H1 (cell line): ENCODE measurements at regions of chr17 and their contacts with region 1.

Region 1: GRCh38 chr17:31524926-31525800 is 133.7 kb downstream of the RAB11FIP4 start:
- DNase-seq: peak; percentile 77 to 99
- H3K4me3 ChIP-seq: no peak overlapping the region
- H3K27ac ChIP-seq: no peak overlapping the region
- H3K4me1 ChIP-seq: no peaks in the 10 kb centered on the region; a peak in 3 of 7 replicates
- H3K27me3 ChIP-seq: no peaks in the 10 kb centered on the region
- CTCF ChIP-seq: peak; percentile 80 to 99 (median 91)
- EP300 ChIP-seq: no peak
- POLR2A ChIP-seq: no peak
- RAD21 ChIP-seq: peak; percentile 97 to 99

Region 2: GRCh38 chr17:31388770-31389661 is 136.1 kb before region 1 on chr17:
- CTCF ChIA-PET with region 1: interaction called, 35 read pairs
- POLR2A ChIA-PET with region 1: no interaction called
- DNase-seq: peak in 1 of 2 experiments; percentile 87
- H3K4me3 ChIP-seq: peak overlapping the region in 1 of 4 experiments; percentile 30; a peak in 1 of 8 replicates
- H3K27ac ChIP-seq: no peak overlapping the region
- H3K4me1 ChIP-seq: peaks cover 0 to 14% (median 9%) of the 10 kb centered on the region in 4 experiments; a peak in 6 of 7 replicates
- H3K27me3 ChIP-seq: peaks cover 1 to 29% (median 22%) of the 10 kb centered on the region in 4 experiments
- CTCF ChIP-seq: peak; percentile 78 to 89 (median 85)
- EP300 ChIP-seq: no peak
- POLR2A ChIP-seq: no peak
- RAD21 ChIP-seq: peak; percentile 67 to 79

Region 3: GRCh38 chr17:31448467-31449077 is 76.6 kb before region 1 on chr17:
- CTCF ChIA-PET with region 1: interaction called, 325 read pairs
- POLR2A ChIA-PET with region 1: no interaction called
- DNase-seq: no peak
- H3K4me3 ChIP-seq: no peak overlapping the region
- H3K27ac ChIP-seq: no peak overlapping the region
- H3K4me1 ChIP-seq: peaks cover 0 to 9% (median under 1%) of the 10 kb centered on the region in 4 experiments; a peak in 2 of 7 replicates
- H3K27me3 ChIP-seq: no peaks in the 10 kb centered on the region
- CTCF ChIP-seq: no peak
- EP300 ChIP-seq: no peak
- POLR2A ChIP-seq: no peak
- RAD21 ChIP-seq: no peak

Region 4: GRCh38 chr17:31508288-31509094 is 16.7 kb before region 1 on chr17:
- CTCF ChIA-PET with region 1: interaction called, 22 read pairs
- POLR2A ChIA-PET with region 1: interaction called, 4 read pairs
- DNase-seq: no peak
- H3K4me3 ChIP-seq: no peak overlapping the region
- H3K27ac ChIP-seq: no peak overlapping the region
- H3K4me1 ChIP-seq: peaks cover 0 to 9% (median 5%) of the 10 kb centered on the region in 4 experiments; a peak in 5 of 7 replicates
- H3K27me3 ChIP-seq: no peaks in the 10 kb centered on the region
- CTCF ChIP-seq: peak; percentile 45 to 68 (median 57)
- EP300 ChIP-seq: no peak
- POLR2A ChIP-seq: no peak
- RAD21 ChIP-seq: peak; percentile 38 to 61

Region 5: GRCh38 chr17:31842183-31843069 is 317.3 kb after region 1 on chr17:
- CTCF ChIA-PET with region 1: interaction called, 82 read pairs
- POLR2A ChIA-PET with region 1: interaction called, 3 read pairs
- DNase-seq: peak; percentile 68 to 87
- H3K4me3 ChIP-seq: no peak overlapping the region
- H3K27ac ChIP-seq: no peak overlapping the region
- H3K4me1 ChIP-seq: no peaks in the 10 kb centered on the region; a peak in 1 of 7 replicates
- H3K27me3 ChIP-seq: peaks cover 0 to 4% (median 0%) of the 10 kb centered on the region in 4 experiments; a peak in 4 of 7 replicates
- CTCF ChIP-seq: peak; percentile 83 to 93 (median 93)
- EP300 ChIP-seq: no peak
- POLR2A ChIP-seq: no peak
- RAD21 ChIP-seq: peak; percentile 100